ENCODE measurements at regions of chr11 and their contacts with region 1.

Region 1: GRCh38 chr11:36492724-36493304 is 17.3 kb downstream of the TRAF6 start:
- DNase-seq: peak; percentile 35
- H3K4me3 Mint-ChIP-seq: no peak overlapping the region
- H3K27ac Mint-ChIP-seq: no peak overlapping the region
- H3K4me1 Mint-ChIP-seq: no peaks in the 10 kb centered on the region
- H3K27me3 Mint-ChIP-seq: no peaks in the 10 kb centered on the region
- CTCF ChIP-seq: peak; percentile 73

Region 2: GRCh38 chr11:36292311-36292722 is 200.5 kb before region 1 on chr11:
- CTCF ChIA-PET with region 1: interaction called, 22 read pairs
- intact Hi-C with region 1: loop called (anchors 1 kb)
- DNase-seq: peak; percentile 21
- H3K4me3 Mint-ChIP-seq: no peak overlapping the region
- H3K27ac Mint-ChIP-seq: no peak overlapping the region
- H3K4me1 Mint-ChIP-seq: peaks cover 20% of the 10 kb centered on the region
- H3K27me3 Mint-ChIP-seq: peaks cover 18% of the 10 kb centered on the region
- CTCF ChIP-seq: no peak

Region 3: GRCh38 chr11:36306888-36307287 is 185.9 kb before region 1 on chr11:
- CTCF ChIA-PET with region 1: interaction called, 10 read pairs
- intact Hi-C with region 1: loop called (anchors 5 kb)
- DNase-seq: no peak
- H3K4me3 Mint-ChIP-seq: no peak overlapping the region
- H3K27ac Mint-ChIP-seq: no peak overlapping the region
- H3K4me1 Mint-ChIP-seq: peaks cover 23% of the 10 kb centered on the region
- H3K27me3 Mint-ChIP-seq: peaks cover 8% of the 10 kb centered on the region
- CTCF ChIP-seq: no peak